AG04449 (cell line): ENCODE measurements at regions of chr1 and their contacts with region 1.

Region 1: DNA sequence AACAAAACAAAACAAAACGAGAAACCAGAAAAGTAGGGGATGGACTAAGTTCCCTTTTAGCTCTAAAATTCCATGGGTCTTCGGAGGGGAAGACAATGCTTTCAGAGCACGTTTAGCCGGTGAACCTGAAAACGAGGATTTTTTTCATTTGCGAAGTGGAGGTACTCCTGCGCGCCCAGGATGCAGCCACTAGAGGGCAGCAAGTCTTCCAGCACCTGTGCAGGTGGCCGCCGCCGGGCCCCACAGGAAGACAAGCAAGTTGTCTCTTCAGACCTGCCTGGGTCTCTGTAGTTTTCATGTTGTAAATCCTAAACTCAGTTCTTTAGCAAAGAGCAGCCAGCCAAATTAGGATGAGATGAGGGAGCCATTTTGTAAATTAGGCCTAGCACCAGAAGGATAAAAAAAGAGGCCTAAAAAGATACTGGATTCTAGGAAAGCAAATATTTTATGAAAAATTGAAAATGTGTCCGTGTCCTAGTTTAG is 17.7 kb upstream of the SNX27 start:
- DNase-seq: no peak
- H3K4me3 ChIP-seq: no peak overlapping the region
- CTCF ChIP-seq: peak; percentile 83

Region 2: GRCh38 chr1:151416231-151416904 is 177.8 kb before region 1 on chr1:
- CTCF ChIA-PET with region 1: no interaction called
- POLR2A ChIA-PET with region 1: no interaction called
- DNase-seq: peak; percentile 65
- H3K4me3 ChIP-seq: no peak overlapping the region
- CTCF ChIP-seq: no peak

Region 3: DNA sequence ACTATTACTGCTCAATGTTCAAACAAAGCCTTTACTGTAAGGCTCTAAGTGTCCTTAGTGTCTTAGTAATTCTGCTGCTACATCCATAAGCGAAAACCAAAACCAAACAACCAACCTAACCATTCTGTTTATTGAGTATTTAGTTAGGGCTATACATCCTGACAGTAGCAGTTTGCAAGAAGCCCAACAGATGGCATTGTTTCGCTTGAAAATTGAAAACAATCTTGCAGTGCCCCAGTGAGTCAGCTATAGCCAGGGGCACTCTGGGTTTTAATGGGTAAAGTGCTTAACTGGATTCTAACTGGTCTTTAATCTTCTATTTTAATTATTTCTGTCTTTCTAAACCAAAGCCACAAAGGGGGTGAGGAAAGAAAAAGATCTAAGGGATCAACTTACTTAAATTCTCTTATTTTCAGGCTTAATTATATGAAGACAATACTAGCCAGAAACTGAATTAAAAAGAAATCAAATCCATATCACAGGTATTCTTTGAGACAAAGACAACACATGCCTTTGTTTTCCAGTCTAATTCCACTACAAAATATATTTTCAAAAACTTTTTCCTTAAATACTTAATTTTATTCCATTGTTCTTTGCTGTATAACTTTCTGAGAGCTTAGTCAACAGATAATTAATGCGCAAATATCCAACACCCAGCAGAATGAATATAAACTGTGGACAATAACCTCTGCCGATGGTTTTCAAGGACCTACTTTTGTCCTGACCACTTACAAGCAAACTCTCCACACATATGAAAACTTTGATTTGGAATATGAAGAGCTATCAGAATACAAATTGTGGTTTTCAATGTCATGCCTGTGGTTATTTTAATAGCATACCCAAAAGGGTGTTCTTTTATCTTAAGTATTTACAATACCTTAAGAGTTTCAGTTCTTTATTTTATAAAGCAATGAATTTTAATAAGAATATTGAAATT is 150.1 kb before region 1 on chr1:
- CTCF ChIA-PET with region 1: interaction called, 12 read pairs
- POLR2A ChIA-PET with region 1: no interaction called
- DNase-seq: peak; percentile 52
- H3K4me3 ChIP-seq: no peak overlapping the region
- CTCF ChIP-seq: peak; percentile 69

Region 4: DNA sequence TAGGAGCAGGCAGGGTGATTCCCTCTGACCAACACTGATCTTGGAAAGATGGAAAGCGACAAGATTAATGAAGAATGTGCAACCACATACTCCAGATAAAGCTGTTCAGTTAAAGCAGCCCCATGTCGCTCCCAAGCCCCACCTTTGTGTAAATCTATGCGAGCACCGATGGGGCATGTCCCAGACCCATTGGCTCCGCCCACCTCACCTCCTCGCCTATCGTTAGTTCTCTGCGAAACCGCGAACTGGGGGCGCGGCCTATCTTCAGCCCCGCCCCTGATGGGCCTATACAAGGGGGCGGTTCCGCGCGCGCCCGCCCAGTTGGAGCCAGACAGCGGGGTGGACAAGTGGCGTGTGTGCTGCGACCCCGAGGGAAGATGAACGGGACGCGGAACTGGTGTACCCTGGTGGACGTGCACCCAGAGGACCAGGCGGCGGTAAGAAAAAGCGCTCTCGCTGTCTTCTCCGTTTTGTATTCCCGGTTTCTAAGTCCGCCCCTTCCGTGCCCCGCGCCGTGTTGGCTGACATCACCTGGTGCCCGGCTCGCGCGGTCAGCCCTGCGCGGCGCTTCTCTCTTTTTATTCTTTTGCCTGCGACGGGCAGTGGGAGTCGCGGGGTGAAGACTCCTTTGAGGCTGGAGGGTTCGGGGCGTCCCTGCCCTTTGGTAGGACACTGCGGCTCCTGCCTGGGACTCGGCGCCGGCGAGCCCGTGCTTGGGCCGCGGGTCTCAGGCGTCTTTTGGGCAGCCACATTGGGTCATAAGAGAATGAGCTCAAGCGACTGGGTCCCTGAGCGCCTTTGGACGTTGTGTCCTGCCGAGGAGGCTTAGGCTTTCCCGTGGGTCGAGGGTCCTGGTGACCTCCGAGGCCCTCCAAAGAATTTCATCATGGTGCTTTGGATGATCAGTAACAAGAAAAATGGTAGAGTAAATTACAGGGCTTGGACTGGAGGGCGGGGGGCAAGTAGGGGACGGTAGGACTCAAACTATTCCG is 53.9 kb before region 1 on chr1 and contains the start of gene TUFT1:
- CTCF ChIA-PET with region 1: interaction called, 23 read pairs
- POLR2A ChIA-PET with region 1: no interaction called
- DNase-seq: no peak
- H3K4me3 ChIP-seq: peak within 1 kb of the TSS; percentile 81
- CTCF ChIP-seq: no peak

Region 5: GRCh38 chr1:151606395-151606794 is 12.2 kb after region 1 on chr1:
- CTCF ChIA-PET with region 1: interaction called, 96 read pairs
- POLR2A ChIA-PET with region 1: no interaction called
- DNase-seq: no peak
- H3K4me3 ChIP-seq: no peak overlapping the region
- CTCF ChIP-seq: no peak

Region 6: DNA sequence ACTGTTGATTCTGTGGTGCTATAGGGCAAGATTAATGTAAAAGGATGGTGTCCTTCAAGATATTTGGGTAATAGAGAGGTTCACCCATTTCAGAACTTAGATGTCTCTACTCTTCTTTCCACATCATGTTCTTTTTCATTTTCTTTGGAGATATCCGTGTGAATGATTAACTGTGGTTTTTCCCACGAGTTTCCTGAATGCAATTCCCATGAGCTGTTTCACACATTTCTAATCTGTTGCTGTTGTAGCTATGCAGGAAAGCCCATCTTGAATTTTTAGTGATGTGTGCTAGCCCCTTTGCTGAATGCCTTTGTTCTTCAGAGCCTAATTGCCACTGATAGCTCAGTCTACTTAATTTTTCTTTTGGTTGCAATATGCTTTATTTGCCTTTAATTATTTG is 45.3 kb after region 1 on chr1:
- CTCF ChIA-PET with region 1: interaction called, 18 read pairs
- POLR2A ChIA-PET with region 1: no interaction called
- DNase-seq: no peak
- H3K4me3 ChIP-seq: no peak overlapping the region
- CTCF ChIP-seq: no peak

Region 7: GRCh38 chr1:151728151-151729054 is 134.2 kb after region 1 on chr1:
- CTCF ChIA-PET with region 1: interaction called, 29 read pairs
- POLR2A ChIA-PET with region 1: no interaction called
- DNase-seq: peak; percentile 34
- H3K4me3 ChIP-seq: peak overlapping the region; percentile 32
- CTCF ChIP-seq: no peak